ENCODE measurements at regions of chr12 and their contacts with region 1.

Region 1: GRCh38 chr12:124745891-124746570 is 117.6 kb downstream of the SCARB1 start:
- DNase-seq: peak; percentile 94
- H3K4me3 ChIP-seq: no peak overlapping the region
- H3K27ac ChIP-seq: peak overlapping the region; percentile 78
- H3K4me1 ChIP-seq: peaks cover 31% of the 10 kb centered on the region
- H3K27me3 ChIP-seq: no peaks in the 10 kb centered on the region
- CTCF ChIP-seq: no peak
- POLR2A ChIP-seq: peak; percentile 45

Region 2: DNA sequence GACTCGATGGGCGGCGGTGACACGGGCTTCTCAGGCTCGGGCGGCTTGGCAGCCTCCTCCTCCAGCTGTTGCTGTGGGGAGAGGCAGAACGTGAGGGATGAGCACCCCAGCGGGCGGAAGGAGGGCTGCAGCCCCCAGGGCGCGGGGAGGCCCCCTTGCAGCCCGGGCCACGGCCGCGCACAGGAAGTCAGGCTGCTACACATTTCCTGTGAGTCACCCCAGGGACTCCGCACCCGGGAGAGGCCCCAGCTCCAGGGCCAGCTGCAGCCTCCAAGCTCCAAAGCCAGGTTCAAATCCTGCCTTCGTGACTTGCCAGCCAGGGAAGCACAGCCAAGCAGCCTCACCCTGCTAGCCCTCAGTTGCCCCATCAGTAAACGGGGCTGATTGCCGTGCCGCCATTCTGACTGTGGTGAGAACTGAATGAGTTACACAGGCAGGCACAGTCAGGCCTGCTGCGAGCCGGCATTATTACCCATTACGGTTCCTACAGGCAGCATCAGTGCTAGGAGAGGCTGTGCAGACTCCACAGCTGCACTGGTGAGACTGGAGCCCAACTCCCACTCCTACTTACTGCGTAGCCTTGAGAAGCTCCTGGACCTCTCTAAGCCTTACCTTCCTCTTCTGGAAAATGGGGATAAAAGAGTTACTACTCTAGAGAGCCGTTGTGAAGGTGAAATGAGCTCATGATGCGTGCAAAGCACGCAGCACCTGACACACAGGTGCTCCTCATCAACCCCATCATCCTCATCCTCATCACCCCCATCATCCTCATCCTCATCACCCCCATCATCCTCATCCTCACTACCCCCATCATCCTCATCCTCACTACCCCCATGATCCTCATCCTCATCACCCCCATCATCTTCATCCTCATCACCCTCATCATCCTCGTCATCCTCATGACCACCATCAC is 279.6 kb before region 1 on chr12:
- CTCF ChIA-PET with region 1: no interaction called
- POLR2A ChIA-PET with region 1: no interaction called
- dilution Hi-C with region 1: no loop called
- intact Hi-C with region 1: loop called (anchors 2 kb)
- DNase-seq: peak; percentile 64
- H3K4me3 ChIP-seq: no peak overlapping the region
- H3K27ac ChIP-seq: peak overlapping the region; percentile 71
- H3K4me1 ChIP-seq: peaks cover 12% of the 10 kb centered on the region
- H3K27me3 ChIP-seq: no peaks in the 10 kb centered on the region
- CTCF ChIP-seq: peak in 1 of 2 donors; percentile 17
- POLR2A ChIP-seq: no peak

Region 3: GRCh38 chr12:124625867-124626675 is 120.0 kb before region 1 on chr12:
- CTCF ChIA-PET with region 1: interaction called, 3 read pairs
- POLR2A ChIA-PET with region 1: interaction called, 3 read pairs
- dilution Hi-C with region 1: no loop called
- intact Hi-C with region 1: loop called (anchors 1 kb)
- DNase-seq: peak; percentile 91
- H3K4me3 ChIP-seq: no peak overlapping the region
- H3K27ac ChIP-seq: peak overlapping the region; percentile 91
- H3K4me1 ChIP-seq: peaks cover 26% of the 10 kb centered on the region
- H3K27me3 ChIP-seq: no peaks in the 10 kb centered on the region
- CTCF ChIP-seq: no peak
- POLR2A ChIP-seq: peak; percentile 51

Region 4: DNA sequence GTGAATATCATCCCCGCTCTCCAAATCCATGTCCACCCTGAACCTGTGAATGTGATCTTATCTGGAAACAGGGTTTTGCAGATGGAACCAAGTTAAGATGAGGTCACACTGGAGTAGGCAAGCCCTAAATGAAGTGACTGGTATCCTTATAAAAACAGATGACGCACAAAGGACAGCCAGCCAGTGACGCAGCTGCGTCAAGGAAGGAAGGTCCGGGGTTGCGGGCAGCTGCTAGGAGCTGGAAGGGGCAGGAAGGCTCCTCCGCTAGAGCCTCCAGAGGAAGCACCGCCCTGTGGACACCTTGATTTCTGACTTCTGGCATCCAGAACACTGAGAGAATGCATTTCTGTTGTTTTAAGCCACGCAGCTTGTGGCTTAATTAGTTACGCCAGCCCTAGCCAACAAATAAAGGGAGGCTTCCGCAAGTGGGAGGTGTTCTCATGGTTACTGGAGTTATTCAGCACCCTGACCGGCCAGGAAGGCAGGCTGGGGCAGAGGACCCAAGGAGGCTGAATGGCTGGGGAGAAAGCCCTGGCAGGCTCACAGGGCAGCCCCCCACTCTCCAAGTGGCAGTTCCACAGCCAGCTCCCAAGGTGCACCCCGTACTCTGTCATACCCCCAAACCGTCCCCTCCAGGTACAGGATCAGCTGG is 51.1 kb before region 1 on chr12:
- CTCF ChIA-PET with region 1: interaction called, 5 read pairs
- POLR2A ChIA-PET with region 1: interaction called, 3 read pairs
- dilution Hi-C with region 1: no loop called
- intact Hi-C with region 1: loop called (anchors 1 kb)
- DNase-seq: peak; percentile 90
- H3K4me3 ChIP-seq: no peak overlapping the region
- H3K27ac ChIP-seq: peak overlapping the region; percentile 65
- H3K4me1 ChIP-seq: peaks cover 15% of the 10 kb centered on the region
- H3K27me3 ChIP-seq: peaks cover 0 to 1% of the 10 kb centered on the region in 2 experiments
- CTCF ChIP-seq: peak in 1 of 2 donors; percentile 13
- POLR2A ChIP-seq: no peak

Measured in endothelial cell of umbilical vein (primary cell).